ENCODE measurements at regions of chr3 and their contacts with region 1.

Region 1: DNA sequence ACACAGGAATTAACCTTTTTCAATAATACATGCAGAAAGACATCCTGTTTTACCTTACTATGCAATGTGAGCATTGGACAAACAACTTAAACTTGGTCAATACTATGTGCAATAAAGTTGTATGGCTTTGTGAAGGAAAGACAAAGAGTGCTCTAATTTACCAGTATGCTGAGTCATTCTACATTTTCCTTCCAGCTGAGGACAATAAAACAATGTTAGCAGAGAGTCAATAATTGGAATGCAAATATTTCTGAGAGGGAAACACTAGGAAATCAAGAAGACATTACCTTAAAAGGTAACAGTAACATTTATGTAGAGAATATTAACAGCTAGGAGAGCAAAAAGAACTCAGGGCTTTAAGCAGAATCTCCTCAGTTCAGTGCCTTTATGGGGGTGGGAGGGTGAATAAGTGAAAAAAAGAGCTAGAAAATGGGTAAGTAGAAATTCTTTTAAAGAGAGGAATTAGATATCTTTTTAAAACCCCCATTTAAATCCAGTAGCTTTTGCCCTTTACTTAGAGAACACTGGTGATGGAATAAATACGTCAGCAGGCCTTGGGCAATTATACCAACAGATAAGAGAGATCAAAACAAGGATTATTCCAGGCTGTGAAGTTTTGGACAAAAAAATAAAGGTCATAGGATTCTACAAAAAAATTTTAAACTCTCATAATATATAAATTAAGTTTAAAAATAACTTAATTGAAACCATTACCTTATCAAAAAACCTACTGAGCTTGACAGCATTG is 11.6 kb upstream of the HGD start:
- DNase-seq: no peak
- ATAC-seq: no peak
- H3K4me3 Mint-ChIP-seq: no peak overlapping the region
- H3K27ac Mint-ChIP-seq: no peak overlapping the region
- H3K4me1 Mint-ChIP-seq: peaks cover 6% of the 10 kb centered on the region
- H3K27me3 Mint-ChIP-seq: no peaks in the 10 kb centered on the region
- CTCF ChIP-seq: no peak

Region 2: DNA sequence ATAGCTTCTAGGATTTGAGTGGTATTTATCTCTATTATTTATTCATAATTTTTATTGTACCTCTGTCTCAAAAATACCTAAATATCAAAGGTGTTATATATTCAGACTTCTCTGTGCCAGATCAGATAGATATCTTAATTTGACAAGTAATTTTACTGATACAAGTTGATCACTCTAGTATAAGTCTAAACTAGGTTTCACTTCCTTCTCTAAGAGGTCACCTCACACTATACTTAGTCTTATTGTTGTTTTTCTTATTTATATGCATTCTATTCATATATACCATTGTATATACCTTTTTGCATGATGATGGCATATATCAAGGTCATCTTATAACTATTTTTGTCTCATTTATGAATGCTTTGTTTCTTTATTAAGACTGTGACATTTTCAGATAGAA is 14.8 kb after region 1 on chr3:
- CTCF ChIA-PET with region 1: no interaction called
- POLR2A ChIA-PET with region 1: no interaction called
- intact Hi-C with region 1: loop called (anchors 2 kb)
- DNase-seq: no peak
- ATAC-seq: no peak
- H3K4me3 Mint-ChIP-seq: no peak overlapping the region
- H3K27ac Mint-ChIP-seq: no peak overlapping the region
- H3K4me1 Mint-ChIP-seq: peaks cover 11% of the 10 kb centered on the region
- H3K27me3 Mint-ChIP-seq: no peaks in the 10 kb centered on the region
- CTCF ChIP-seq: no peak

Measured in activated B cell treated with CpG ODN at 0.5 μM for 24 hours (primary cell).